Activated T-helper 1 cell treated with anti-CD3 and anti-CD28 coated beads, Interleukin-12 subunit alpha, Interleukin-12 subunit beta, Interleukin-2, Interleukin-4 antibody, amounts not matched to agents 30 ng/mL and 10 ng/mL and 1 ng/mL, durations not matched to agents 14 hours and 24 hours and 36 hours (primary cell): ENCODE measurements at regions of chr6 and their contacts with region 1.

Region 1: GRCh38 chr6:157764178-157765033 is 58.6 kb upstream of the SNX9 start:
- DNase-seq: peak; percentile 80
- H3K4me3 Mint-ChIP-seq: peak overlapping the region; percentile 34
- H3K27ac Mint-ChIP-seq: peak overlapping the region; percentile 98
- H3K4me1 Mint-ChIP-seq: peaks cover 82% of the 10 kb centered on the region
- H3K27me3 Mint-ChIP-seq: peaks cover 10% of the 10 kb centered on the region

Region 2: GRCh38 chr6:157107915-157108651 is 656.3 kb before region 1 on chr6:
- intact Hi-C with region 1: loop called (anchors 10 kb)
- DNase-seq: no peak
- H3K4me3 Mint-ChIP-seq: no peak overlapping the region
- H3K27ac Mint-ChIP-seq: peak overlapping the region; percentile 73
- H3K4me1 Mint-ChIP-seq: peaks cover 55% of the 10 kb centered on the region
- H3K27me3 Mint-ChIP-seq: no peaks in the 10 kb centered on the region

Region 3: GRCh38 chr6:157535339-157536222 is 228.8 kb before region 1 on chr6:
- intact Hi-C with region 1: loop called (anchors 2 kb)
- DNase-seq: peak; percentile 8
- H3K4me3 Mint-ChIP-seq: peak overlapping the region; percentile 2
- H3K27ac Mint-ChIP-seq: peak overlapping the region; percentile 73
- H3K4me1 Mint-ChIP-seq: peaks cover 55% of the 10 kb centered on the region
- H3K27me3 Mint-ChIP-seq: peaks cover 8% of the 10 kb centered on the region

Region 4: DNA sequence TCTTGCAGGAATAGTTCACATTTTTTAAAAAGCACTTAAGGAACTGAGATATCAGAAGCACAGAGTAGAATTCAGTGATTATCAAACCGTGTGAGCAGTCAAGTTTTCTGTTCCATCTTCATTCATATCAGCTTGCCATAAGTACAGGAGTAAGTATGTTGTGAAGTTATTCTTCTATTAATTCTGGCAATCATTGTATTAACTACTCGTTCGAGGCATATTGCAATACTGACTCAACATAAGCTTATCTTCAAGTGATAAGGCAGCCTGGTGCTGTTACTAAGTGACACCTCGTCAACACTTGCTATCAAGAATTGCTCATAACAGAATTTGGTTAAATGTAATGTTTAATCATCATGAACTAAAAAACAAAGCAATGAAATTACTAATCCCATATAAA is 17.0 kb before region 1 on chr6:
- intact Hi-C with region 1: no loop called
- DNase-seq: no peak
- H3K4me3 Mint-ChIP-seq: no peak overlapping the region
- H3K27ac Mint-ChIP-seq: no peak overlapping the region
- H3K4me1 Mint-ChIP-seq: peaks cover 19% of the 10 kb centered on the region
- H3K27me3 Mint-ChIP-seq: peaks cover 6% of the 10 kb centered on the region

Region 5: DNA sequence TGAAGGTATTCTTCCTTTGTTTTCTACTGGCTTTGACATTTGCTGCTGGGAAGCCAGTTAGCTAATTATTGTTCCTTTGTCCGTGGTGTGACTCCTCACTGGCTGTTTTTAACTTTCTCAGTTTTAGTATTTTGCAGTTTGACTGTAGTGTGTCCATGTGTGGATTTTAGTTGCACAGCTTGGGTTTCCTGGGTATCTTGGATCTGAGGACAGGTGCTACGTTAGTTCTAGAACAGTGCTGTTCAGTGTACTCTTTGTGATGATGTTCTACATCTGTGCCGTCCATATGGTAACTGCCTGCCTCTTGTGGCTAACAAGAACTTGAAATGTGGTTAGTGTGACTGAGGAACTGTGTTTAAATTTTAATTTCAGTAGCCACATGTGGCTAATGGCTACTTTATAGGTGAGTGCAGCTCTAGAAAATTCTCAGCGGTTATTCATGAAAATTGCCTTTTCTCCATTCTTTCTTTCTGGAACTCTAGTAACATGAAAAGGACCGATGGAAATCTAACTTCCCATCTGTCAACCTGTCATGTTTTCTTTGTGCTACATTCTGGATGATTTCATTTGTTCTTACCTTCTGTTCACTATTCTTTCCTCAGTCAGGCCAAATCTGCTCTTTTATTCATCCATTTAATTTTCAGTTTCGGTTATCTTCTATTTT is 66.1 kb after region 1 on chr6:
- intact Hi-C with region 1: loop called (anchors 1 kb)
- DNase-seq: no peak
- H3K4me3 Mint-ChIP-seq: no peak overlapping the region
- H3K27ac Mint-ChIP-seq: peak overlapping the region; percentile 45
- H3K4me1 Mint-ChIP-seq: peaks cover 67% of the 10 kb centered on the region
- H3K27me3 Mint-ChIP-seq: no peaks in the 10 kb centered on the region

Region 6: DNA sequence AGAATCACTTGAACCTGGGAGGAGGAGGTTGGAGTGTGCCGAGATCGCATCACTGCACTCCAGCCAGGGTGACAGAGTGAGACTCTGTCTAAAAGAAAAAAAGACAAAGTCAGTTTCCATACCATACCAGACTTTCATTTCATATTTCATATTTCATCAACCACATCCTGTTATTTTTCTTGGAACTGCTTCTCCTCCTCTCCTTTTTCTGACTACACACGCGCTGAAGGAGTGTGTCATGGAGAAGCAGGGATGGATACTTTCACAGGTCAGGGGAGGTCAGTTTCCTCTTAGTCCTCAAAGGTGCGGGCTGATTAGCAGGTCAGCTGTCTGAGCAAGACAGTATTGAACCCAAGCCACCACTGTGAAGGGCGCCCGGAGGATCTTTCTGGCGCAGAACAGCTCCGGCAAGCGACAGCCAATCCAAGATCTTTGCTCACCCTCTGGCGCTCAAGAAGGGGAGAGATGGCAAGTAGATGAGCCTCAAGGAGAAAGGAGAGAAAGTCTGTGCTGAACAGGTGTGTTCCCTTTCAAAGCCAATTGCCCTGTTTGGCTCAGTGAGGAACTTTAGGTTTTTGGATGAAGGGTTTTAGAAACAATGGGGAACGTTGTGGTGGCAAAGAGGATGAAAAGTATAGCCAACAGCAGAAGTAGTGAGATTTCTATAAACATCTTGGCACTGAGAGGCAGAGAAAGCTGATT is 198.3 kb after region 1 on chr6:
- intact Hi-C with region 1: loop called (anchors 2 kb)
- DNase-seq: no peak
- H3K4me3 Mint-ChIP-seq: peak overlapping the region; percentile 69
- H3K27ac Mint-ChIP-seq: peak overlapping the region; percentile 86
- H3K4me1 Mint-ChIP-seq: peaks cover 28% of the 10 kb centered on the region
- H3K27me3 Mint-ChIP-seq: peaks cover 1% of the 10 kb centered on the region

Region 7: DNA sequence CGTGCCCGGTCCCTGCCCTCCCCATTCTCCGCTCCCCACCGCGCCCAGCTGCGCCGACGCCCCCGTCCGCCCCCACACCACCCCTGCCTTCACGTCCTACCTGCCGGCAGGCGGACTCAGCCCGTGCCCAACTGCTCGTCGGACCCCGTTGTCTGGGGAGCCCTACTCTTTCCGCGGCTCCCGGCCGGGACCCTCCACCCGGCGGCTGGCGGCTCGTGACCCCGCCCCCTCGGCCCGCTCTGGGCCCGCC is 403.6 kb after region 1 on chr6 and contains the start of gene SERAC1:
- intact Hi-C with region 1: loop called (anchors 5 kb)
- DNase-seq: no peak
- H3K4me3 Mint-ChIP-seq: peak within 1 kb of the TSS; percentile 83
- H3K27ac Mint-ChIP-seq: peak within 1 kb of the TSS; percentile 97
- H3K4me1 Mint-ChIP-seq: peaks cover 30% of the 10 kb centered on the region
- H3K27me3 Mint-ChIP-seq: no peaks in the 10 kb centered on the region
- total RNA-seq, gene SERAC1: 8.0 and 8.3 TPM in 2 replicates